ENCODE measurements at regions of chr11 and their contacts with region 1.

Region 1: DNA sequence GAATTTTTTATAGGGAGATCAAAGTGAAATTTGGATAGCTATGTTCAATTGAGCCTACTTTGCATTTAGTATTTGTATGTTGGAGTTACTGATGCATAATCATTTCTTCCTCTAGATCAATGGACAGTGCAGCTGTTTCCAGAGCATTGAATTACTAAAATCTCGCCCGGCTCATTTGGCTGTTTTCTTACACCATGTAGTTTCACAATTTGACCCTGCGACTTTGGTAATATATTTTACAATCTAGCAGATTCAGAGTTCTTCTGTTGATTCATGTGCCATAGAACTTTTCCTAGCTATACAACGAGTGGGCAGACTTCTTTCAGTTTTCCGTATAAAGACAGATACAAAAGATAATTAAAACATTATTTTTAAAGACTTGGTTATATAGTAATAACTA is 70.0 kb upstream of the GRIK4 start:
- DNase-seq: no peak
- H3K4me3 ChIP-seq: no peak overlapping the region
- H3K27ac ChIP-seq: no peak overlapping the region
- H3K4me1 ChIP-seq: no peaks in the 10 kb centered on the region
- H3K27me3 ChIP-seq: no peaks in the 10 kb centered on the region
- CTCF ChIP-seq: no peak

Region 2: DNA sequence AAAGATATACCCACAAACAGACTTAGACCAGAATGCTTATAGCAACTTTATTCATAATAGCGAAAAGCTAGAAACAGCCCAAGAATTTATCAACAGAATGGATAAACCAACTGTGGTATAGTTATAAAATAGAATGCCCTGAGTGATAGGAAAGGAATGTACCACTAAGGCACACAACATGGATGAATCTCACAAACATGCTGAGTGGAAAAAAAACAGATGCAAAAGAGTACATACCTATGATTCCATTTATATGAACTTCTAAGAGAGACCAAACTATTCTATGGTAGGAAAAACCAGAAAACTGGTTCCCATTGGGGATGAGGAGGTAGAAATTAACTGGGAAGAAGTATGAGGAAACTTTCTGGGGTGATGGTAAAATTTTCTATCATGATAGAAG is 29.5 kb after region 1 on chr11:
- CTCF ChIA-PET with region 1: no interaction called
- POLR2A ChIA-PET with region 1: no interaction called
- intact Hi-C with region 1: loop called (anchors 5 kb)
- DNase-seq: no peak
- H3K4me3 ChIP-seq: no peak overlapping the region
- H3K27ac ChIP-seq: no peak overlapping the region
- H3K4me1 ChIP-seq: no peaks in the 10 kb centered on the region
- H3K27me3 ChIP-seq: no peaks in the 10 kb centered on the region
- CTCF ChIP-seq: no peak

Region 3: GRCh38 chr11:120667281-120667680 is 225.7 kb after region 1 on chr11:
- CTCF ChIA-PET with region 1: no interaction called
- POLR2A ChIA-PET with region 1: no interaction called
- intact Hi-C with region 1: no loop called
- DNase-seq: no peak
- H3K4me3 ChIP-seq: no peak overlapping the region
- H3K27ac ChIP-seq: no peak overlapping the region
- H3K4me1 ChIP-seq: no peaks in the 10 kb centered on the region
- H3K27me3 ChIP-seq: peaks cover 97% of the 10 kb centered on the region
- CTCF ChIP-seq: no peak

Region 4: DNA sequence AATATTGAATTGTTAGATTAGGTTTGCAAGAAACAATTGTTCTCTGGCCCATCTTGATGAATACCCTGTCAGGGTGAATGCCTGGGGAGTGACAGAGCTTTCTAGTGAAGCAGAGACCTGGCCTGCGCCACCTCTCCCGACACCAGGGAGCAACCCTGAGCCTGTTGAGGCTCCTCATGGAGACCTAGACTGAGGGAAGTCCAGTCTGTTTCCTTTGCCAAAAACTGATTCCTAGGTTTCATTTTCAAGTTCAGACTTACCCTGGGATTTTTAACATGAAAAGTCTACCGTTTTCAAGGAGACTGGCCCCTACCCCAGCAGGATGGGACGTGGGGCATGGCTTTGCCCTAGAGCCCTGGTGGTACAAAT is 1184.9 kb after region 1 on chr11:
- CTCF ChIA-PET with region 1: no interaction called
- POLR2A ChIA-PET with region 1: interaction called, 10 read pairs
- intact Hi-C with region 1: no loop called
- DNase-seq: no peak
- H3K4me3 ChIP-seq: no peak overlapping the region
- H3K27ac ChIP-seq: no peak overlapping the region
- H3K4me1 ChIP-seq: no peaks in the 10 kb centered on the region
- H3K27me3 ChIP-seq: peaks cover 79% of the 10 kb centered on the region
- CTCF ChIP-seq: no peak